A673 (cell line): ENCODE measurements at regions of chr12 and their contacts with region 1.

Region 1: DNA sequence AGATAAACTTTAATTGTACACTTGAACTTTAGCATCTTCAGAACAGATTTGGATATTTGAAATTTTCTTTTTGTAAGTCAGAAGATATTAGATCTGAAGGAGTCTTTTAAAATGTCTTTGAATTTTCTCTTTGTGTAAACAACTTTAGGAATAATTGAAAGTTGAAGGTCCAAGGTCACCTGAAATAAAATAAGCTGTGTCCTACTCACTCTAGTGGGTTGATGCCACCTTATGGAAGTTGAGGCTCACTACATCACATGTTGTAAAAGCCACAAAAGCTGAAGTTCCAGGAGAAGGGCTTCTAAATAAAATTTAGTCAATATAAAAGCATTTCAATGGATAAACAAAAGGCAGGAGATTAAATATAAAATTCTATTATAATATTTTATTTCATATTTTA is 122.0 kb upstream of the ATXN7L3B start:
- DNase-seq: peak; percentile 60
- H3K4me3 ChIP-seq: no peak overlapping the region
- H3K27ac ChIP-seq: no peak overlapping the region
- H3K4me1 ChIP-seq: peaks cover 31% of the 10 kb centered on the region
- H3K27me3 ChIP-seq: no peaks in the 10 kb centered on the region
- CTCF ChIP-seq: peak; percentile 73

Region 2: DNA sequence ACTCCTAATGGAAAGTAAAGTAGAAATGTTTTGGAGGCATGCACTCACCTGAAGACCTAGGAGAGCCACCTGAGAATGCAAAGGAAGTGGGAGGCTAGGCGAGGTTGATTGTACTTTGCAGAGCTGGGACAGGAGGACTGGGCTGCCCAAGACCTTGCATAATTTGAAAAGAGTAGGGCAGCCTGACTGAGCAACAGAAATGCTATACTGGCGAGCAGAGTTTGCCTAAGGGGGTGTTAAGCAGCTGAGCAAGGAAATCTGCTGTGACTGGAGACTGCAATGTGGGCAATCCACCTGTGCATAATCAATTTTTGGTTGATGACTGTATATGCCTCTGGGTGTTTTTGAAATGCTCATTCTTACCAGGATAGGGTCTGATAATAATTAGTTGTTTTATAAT is 1309.3 kb before region 1 on chr12:
- CTCF ChIA-PET with region 1: no interaction called
- POLR2A ChIA-PET with region 1: no interaction called
- intact Hi-C with region 1: no loop called
- DNase-seq: no peak
- H3K4me3 ChIP-seq: no peak overlapping the region
- H3K27ac ChIP-seq: no peak overlapping the region
- H3K4me1 ChIP-seq: no peaks in the 10 kb centered on the region
- H3K27me3 ChIP-seq: no peaks in the 10 kb centered on the region
- CTCF ChIP-seq: no peak

Region 3: GRCh38 chr12:73935817-73936216 is 479.8 kb before region 1 on chr12:
- CTCF ChIA-PET with region 1: interaction called, 4 read pairs
- POLR2A ChIA-PET with region 1: no interaction called
- intact Hi-C with region 1: loop called (anchors 10 kb)
- DNase-seq: peak; percentile 12
- H3K4me3 ChIP-seq: no peak overlapping the region
- H3K27ac ChIP-seq: no peak overlapping the region
- H3K4me1 ChIP-seq: no peaks in the 10 kb centered on the region
- H3K27me3 ChIP-seq: no peaks in the 10 kb centered on the region
- CTCF ChIP-seq: peak; percentile 59

Region 4: GRCh38 chr12:73984552-73984951 is 431.1 kb before region 1 on chr12:
- CTCF ChIA-PET with region 1: no interaction called
- POLR2A ChIA-PET with region 1: no interaction called
- intact Hi-C with region 1: no loop called
- DNase-seq: no peak
- H3K4me3 ChIP-seq: no peak overlapping the region
- H3K27ac ChIP-seq: no peak overlapping the region
- H3K4me1 ChIP-seq: no peaks in the 10 kb centered on the region
- H3K27me3 ChIP-seq: no peaks in the 10 kb centered on the region
- CTCF ChIP-seq: no peak

Region 5: DNA sequence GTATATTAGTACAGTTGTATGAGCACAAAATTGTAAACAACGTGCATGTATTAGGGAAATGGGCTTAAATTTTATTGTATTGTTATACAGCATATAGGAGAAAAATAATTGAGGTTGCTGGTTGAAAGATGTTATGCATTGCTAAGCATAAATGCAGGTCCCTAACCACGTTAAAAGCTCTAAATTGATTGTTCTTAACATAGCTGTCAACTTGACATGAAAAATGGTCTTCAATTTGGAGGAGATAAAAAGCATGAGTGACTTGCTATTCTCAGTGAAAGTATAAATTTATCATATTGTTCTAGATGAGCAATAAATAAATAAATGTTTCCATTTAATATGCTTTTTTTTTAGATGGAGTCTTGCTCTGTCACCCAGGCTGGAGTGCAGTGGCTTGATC is 384.6 kb before region 1 on chr12:
- CTCF ChIA-PET with region 1: no interaction called
- POLR2A ChIA-PET with region 1: no interaction called
- intact Hi-C with region 1: loop called (anchors 10 kb)
- DNase-seq: no peak
- H3K4me3 ChIP-seq: no peak overlapping the region
- H3K27ac ChIP-seq: no peak overlapping the region
- H3K4me1 ChIP-seq: no peaks in the 10 kb centered on the region
- H3K27me3 ChIP-seq: no peaks in the 10 kb centered on the region
- CTCF ChIP-seq: no peak

Region 6: DNA sequence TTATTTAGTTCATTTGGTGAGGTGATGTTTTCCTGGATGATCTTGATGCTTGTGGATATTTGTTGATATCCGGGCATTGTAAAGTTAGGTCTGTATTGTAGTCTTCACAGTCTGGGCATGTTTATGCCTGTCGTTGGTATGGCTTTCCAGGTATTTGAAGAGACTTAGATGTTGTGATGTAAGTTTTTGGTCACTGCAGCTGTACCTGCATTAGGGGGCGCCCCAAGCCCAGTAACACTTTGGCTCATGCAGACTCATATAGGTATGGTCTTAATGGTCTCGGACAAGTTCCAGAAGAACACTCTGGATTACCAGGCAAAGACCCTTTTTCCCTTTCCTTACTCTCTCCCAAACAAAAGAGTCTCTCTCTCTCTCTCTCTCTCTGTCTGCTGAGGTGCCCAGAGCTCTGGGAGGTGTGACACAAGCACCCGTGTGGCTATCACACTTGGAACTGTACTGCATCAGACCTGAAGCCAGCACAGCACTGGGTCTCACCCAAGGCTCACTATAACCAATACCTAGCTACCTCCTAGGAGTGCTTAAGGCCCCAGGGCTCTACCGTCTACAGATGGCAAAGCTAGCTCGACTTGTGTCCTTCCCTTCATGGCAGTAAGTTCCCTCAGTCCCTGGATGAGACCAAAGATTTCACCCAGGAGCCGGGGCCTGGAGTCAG is 303.8 kb before region 1 on chr12:
- CTCF ChIA-PET with region 1: no interaction called
- POLR2A ChIA-PET with region 1: no interaction called
- intact Hi-C with region 1: loop called (anchors 5 kb)
- DNase-seq: peak; percentile 51
- H3K4me3 ChIP-seq: no peak overlapping the region
- H3K27ac ChIP-seq: no peak overlapping the region
- H3K4me1 ChIP-seq: no peaks in the 10 kb centered on the region
- H3K27me3 ChIP-seq: no peaks in the 10 kb centered on the region
- CTCF ChIP-seq: peak; percentile 63

Region 7: GRCh38 chr12:74537707-74538385 is 122.2 kb after region 1 on chr12 and contains the start of gene ATXN7L3B:
- CTCF ChIA-PET with region 1: no interaction called
- POLR2A ChIA-PET with region 1: interaction called, 3 read pairs
- intact Hi-C with region 1: loop called (anchors 5 kb)
- DNase-seq: peak; percentile 98
- H3K4me3 ChIP-seq: peak within 1 kb of the TSS; percentile 88
- H3K27ac ChIP-seq: peak within 1 kb of the TSS; percentile 95
- H3K4me1 ChIP-seq: peaks cover 16% of the 10 kb centered on the region
- H3K27me3 ChIP-seq: no peaks in the 10 kb centered on the region
- CTCF ChIP-seq: no peak
- total RNA-seq, gene ATXN7L3B: 42.2 and 43.7 TPM in 2 replicates